Activated naive CD4-positive, alpha-beta T cell treated with anti-CD3 and anti-CD28 coated beads for 36 hours (primary cell): ENCODE measurements at regions of chr12 and their contacts with region 1.

Region 1: DNA sequence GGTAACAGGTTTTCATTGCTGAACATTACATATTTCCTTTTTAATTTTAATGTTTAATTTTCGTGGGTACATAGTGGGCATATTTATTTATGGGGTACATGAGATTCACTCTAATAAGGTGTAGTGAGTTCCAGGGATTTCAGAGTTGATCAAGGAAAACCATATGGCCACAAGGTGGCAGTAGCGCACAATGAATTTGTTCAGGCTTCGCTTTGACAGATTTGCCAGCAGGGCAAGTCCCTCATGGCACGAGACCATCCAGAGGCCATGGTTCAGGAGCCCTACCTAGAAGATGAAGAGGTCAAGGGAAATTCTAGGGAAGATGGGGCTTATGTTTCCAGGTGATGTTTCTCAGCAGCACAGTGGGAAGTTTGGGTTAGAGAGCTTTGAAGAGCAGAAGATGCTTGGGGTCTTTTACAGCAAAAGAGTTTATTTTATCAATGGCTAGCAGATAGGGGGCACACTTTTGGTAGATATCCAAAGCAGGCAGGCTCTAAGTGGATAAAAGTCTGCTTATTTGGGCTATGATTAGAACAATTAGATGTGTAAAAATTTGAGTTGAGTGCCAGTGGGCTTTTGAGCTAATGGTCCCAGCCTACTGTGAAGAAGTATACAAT is 1004.4 kb downstream of the AACS start:
- DNase-seq: peak; percentile 72
- H3K4me3 Mint-ChIP-seq: no peak overlapping the region
- H3K27ac Mint-ChIP-seq: no peak overlapping the region
- H3K4me1 Mint-ChIP-seq: no peaks in the 10 kb centered on the region
- H3K27me3 Mint-ChIP-seq: no peaks in the 10 kb centered on the region

Region 2: GRCh38 chr12:126385785-126386184 is 316.1 kb after region 1 on chr12:
- CTCF ChIA-PET with region 1: no interaction called
- intact Hi-C with region 1: no loop called
- DNase-seq: no peak
- H3K4me3 Mint-ChIP-seq: no peak overlapping the region
- H3K27ac Mint-ChIP-seq: no peak overlapping the region
- H3K4me1 Mint-ChIP-seq: peaks cover 14% of the 10 kb centered on the region
- H3K27me3 Mint-ChIP-seq: no peaks in the 10 kb centered on the region

Region 3: DNA sequence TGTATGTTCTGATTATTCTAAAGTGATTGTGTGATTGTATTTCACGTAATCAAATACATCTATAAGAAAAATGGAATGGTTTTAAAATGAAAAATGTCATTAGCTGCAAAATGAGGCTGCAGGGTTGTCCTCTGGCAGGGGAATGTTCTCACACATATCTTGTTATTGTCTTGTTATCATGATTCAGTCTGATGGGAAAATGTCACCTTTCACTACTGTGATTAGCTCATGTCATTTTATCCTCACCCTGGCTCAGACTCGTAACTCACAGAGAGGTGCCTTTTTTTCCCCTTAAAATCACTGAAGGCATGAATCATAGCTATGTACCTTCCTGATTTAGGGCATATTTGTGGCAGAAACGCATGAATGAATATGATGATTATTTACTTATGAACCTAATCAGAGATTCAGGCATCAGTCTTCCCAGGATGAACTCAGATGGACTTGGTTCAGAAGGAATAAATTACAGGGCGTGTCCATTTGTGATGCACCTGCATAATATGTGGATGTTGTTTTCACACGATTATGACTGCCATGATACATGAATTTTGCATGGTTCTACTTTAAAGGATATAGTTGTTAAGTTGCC is 334.7 kb after region 1 on chr12:
- CTCF ChIA-PET with region 1: no interaction called
- intact Hi-C with region 1: no loop called
- DNase-seq: no peak
- H3K4me3 Mint-ChIP-seq: no peak overlapping the region
- H3K27ac Mint-ChIP-seq: no peak overlapping the region
- H3K4me1 Mint-ChIP-seq: peaks cover 2% of the 10 kb centered on the region
- H3K27me3 Mint-ChIP-seq: no peaks in the 10 kb centered on the region

Region 4: DNA sequence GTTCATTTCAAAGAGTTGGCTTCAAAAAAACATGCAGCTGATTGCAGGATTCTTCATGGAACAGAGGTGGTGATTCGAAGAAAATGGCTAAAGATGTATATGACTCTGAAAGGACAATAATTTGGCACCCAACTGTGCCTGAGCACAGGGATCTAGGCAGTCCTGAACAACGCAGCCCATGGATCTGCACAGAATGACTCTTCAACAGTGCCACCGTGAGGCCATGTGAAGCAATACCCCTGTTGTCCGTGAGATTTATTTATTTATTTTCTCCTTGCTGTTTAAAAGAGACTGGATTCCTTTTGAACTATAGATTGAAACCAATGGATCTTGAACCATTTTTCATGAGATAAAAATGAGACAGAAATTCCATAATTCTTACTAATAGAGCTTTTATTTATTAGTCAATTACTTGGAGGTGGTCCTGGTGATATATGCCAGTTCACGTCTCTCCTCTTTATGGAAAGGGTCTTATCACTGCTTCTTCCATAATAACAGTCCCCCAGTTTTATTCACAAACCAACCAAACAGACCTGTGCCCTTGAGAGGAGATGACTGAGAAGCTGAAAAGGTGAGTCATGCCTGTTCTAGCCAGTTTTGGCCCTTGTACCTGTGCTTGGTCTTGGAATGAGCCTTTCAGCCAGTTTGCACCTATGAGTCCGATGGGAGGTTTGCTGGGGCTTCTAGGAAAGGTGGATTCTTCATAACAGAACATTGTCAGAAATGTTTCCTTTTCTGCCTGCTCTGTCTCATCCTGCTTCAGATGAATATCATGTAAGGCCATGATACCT is 593.8 kb after region 1 on chr12:
- CTCF ChIA-PET with region 1: interaction called, 4 read pairs
- intact Hi-C with region 1: loop called (anchors 2 kb)
- DNase-seq: peak; percentile 38
- H3K4me3 Mint-ChIP-seq: no peak overlapping the region
- H3K27ac Mint-ChIP-seq: no peak overlapping the region
- H3K4me1 Mint-ChIP-seq: no peaks in the 10 kb centered on the region
- H3K27me3 Mint-ChIP-seq: peaks cover 5% of the 10 kb centered on the region

Region 5: DNA sequence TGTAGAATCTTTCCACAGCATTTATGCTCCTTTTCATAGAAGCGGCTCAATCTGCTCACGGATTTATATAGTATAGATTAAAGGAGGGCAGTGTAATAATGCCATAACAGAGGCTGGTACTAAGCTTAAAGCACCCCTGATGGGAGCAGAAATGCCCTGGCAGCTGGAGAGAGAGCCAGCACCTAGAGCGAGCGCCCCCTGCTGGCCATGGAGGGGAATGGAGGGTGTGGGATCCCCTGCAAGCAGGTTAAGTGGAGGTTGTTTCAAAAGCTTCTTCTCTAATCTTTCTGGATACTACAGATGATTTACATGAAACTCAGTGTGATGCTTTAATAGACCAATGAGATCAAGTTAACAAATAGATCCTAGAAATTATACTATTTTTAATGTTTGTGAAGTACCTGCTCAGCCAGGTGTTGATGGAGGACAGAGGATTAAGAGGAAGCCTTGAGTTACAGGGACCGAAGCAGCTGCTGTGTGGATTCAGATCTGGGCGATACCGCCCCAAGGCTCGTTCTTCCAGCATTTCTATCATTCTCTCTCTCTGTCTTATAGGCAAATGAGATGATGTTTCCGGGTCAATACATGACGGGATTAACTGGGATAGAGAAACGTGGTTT is 678.0 kb after region 1 on chr12:
- CTCF ChIA-PET with region 1: interaction called, 3 read pairs
- intact Hi-C with region 1: loop called (anchors 2 kb)
- DNase-seq: peak; percentile 69
- H3K4me3 Mint-ChIP-seq: no peak overlapping the region
- H3K27ac Mint-ChIP-seq: no peak overlapping the region
- H3K4me1 Mint-ChIP-seq: no peaks in the 10 kb centered on the region
- H3K27me3 Mint-ChIP-seq: peaks cover 6% of the 10 kb centered on the region